ENCODE measurements at regions of chr9 and their contacts with region 1.

Region 1: DNA sequence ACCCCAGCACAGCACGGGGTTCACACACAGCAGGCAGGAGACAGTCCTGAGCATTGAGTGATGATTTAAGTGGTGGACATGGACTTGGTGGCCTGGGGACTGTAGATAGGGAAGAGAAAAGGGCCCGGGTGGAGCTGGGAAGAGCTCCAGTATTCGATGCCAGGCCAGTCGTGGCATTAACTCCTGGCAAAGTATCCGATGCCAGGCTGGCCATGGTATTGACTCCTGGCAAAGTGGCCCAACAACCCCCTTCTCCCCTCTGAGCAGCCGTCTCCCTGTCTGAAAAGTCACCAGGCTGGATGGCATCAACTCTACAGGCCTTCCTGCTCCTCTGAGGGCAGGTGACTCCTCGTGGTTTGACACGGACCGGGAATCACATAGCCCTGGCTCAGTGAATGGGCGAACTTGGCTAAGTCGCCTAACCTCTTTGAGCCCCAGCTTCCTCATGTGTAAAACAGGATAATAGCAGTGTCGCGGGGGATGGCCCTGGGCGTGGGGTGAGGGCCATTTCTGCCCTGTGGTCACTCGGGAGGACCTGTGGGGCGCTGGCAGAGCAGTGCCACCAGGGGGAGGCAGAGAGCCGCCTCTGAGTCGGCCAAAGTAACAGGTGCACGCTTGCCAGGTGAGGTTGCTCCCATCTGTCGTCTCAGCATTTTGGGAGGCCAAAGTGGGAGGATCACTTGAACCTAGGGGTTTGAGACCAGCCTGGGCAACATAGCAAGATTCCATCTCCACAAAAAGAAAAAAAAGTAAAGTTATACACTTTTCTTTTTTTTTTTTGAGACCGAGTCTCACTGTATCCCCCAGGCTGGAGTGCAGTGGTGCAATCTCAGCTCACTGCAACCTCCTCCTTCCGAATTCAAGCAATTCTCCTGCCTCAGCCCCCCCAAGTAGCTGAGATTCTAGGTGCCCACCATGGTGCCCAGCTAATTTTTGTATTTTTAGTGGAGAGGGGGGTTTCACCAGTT is 5.7 kb upstream of the SEC16A start:
- DNase-seq: peak; percentile 84
- H3K4me3 Mint-ChIP-seq: no peak overlapping the region
- H3K27ac Mint-ChIP-seq: no peak overlapping the region
- H3K4me1 Mint-ChIP-seq: peaks cover 7% of the 10 kb centered on the region
- H3K27me3 Mint-ChIP-seq: peaks cover 27% of the 10 kb centered on the region

Region 2: GRCh38 chr9:136525841-136526499 is 37.4 kb after region 1 on chr9:
- CTCF ChIA-PET with region 1: no interaction called
- DNase-seq: no peak
- H3K4me3 Mint-ChIP-seq: no peak overlapping the region
- H3K27ac Mint-ChIP-seq: no peak overlapping the region
- H3K4me1 Mint-ChIP-seq: peaks cover 16% of the 10 kb centered on the region
- H3K27me3 Mint-ChIP-seq: no peaks in the 10 kb centered on the region

Region 3: DNA sequence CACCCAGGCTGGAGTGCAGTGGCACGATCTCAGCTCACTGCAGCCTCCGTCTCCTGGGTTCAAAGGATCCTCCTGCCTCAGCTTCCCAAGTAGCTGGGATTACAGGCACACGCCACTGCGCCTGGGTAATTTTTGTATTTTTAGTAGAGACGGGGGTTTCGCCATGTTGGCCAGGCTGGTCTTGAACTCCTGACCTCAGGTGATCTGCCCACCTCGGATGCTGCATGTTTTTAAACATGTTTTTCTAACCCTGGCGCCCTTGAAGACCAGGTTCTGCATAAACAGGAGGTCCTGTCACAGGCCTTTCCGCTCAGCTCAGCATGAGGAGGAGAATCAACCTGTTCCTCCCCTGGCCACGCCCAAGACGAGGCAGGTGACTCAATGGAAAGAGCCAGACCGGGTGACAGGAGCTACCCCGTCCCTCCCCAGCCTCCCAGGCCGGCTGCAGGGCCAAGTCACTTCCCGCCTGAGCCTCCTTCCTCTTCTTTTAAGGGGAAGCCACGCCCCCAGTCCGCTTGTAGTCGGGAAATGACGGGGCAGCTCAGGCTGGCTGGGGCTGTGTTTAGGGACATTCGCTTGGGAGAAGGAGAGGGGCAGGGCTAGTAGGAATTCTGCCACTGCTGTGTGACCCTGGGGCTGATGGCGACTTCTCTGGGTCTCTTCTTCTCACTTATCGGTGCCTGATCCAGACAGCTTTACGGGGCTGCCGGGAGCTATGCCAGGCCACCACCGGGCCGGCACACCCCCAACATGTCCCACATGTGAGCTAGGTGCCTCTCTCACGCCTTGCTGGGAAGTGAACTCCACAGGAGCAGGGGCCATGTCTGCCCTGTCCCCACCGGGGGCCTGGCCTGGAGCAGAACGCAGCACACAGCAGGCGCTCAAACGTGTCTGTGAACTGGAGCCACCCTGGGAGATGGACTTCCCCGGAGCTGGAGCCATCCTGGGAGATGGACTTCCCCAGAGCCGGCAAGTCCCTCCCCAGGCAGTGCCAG is 51.2 kb after region 1 on chr9:
- CTCF ChIA-PET with region 1: interaction called, 12 read pairs
- DNase-seq: peak; percentile 98
- H3K4me3 Mint-ChIP-seq: peak overlapping the region; percentile 76
- H3K27ac Mint-ChIP-seq: peak overlapping the region; percentile 100
- H3K4me1 Mint-ChIP-seq: peaks cover 77% of the 10 kb centered on the region
- H3K27me3 Mint-ChIP-seq: no peaks in the 10 kb centered on the region

Region 4: DNA sequence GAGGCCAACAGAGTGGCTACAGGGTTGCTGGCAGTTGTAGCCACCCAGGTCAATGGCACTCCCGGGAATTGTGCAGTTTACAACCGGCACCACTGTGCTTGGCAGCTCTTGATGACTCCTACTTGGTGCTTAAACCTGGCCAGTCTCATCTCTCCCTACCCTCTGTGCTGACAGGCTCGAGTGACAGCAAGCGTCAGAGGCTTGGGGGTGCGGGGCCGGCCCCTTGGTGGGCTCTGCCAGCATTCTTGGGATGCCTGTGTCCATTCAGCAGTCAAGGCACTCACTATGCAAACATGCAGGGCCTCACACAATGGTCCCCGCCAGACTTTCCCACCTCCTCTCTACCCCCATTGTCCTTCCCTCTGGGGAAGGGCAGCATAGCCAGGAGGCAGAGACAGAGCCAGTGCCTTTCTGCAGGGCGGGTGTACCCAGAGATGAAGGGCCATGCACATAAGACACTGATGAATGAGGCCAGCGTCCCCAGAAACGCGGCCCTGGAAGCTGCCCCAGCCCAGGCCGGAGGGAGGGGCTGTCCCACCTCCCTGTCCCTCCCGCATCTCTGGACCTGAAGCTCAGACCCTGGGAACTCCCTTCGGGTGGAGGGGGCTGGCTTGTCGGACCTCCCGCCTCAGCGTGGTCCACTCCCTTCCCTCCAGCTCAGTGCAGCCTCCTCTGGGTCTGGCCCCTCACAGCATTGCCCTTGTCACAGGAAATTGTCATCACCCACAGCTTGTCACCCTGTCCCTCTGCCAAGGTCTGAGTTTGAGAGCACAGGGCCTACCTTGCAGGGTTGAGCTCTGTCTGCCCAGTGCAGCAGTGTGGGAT is 83.7 kb after region 1 on chr9:
- CTCF ChIA-PET with region 1: no interaction called
- DNase-seq: no peak
- H3K4me3 Mint-ChIP-seq: no peak overlapping the region
- H3K27ac Mint-ChIP-seq: no peak overlapping the region
- H3K4me1 Mint-ChIP-seq: no peaks in the 10 kb centered on the region
- H3K27me3 Mint-ChIP-seq: peaks cover 4% of the 10 kb centered on the region